ENCODE measurements at regions of chr4 and their contacts with region 1.

Region 1: DNA sequence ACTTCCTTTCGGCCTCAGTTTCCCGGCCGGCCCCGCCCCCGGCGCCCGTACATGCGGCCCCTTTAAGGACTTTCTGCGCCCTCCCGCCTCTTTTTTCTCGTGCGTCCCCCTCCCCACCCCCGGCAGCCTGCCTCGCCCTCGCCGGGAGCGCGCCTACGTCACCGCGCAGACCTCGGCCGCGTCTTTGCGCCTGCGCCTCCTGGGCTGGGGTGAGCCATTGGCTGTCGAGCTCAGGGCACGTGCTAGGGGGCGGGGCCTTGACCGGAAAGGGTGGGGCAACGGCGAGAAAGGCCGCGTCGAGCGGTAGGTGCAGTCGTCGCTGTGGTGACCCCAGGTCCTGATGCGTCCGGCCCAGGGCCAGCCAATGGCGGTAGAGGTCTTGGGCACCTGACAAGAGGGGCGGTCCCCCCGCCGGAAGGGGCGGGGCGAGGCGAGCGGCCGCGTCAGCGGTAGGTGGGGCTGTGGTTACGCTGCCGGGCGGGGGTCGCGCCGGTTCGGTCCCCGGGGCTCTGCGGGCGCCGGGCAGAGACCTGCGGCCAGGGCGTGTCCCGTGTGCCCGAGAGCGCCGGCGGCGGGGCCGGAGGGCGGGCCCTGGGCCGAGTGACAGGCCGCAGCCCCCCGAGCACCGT is at the start of gene UVSSA:
- DNase-seq: peak; percentile 98 to 99
- ATAC-seq: peak; percentile 87 to 93
- H3K4me3 ChIP-seq: peak within 1 kb of the TSS; percentile 91
- H3K27ac ChIP-seq: peak within 1 kb of the TSS; percentile 97 to 99
- H3K4me1 ChIP-seq: peaks cover 8% of the 10 kb centered on the region; the same call in 1 of the 3 replicates
- CTCF ChIP-seq: no peak
- EP300 ChIP-seq: no peak
- POLR2A ChIP-seq: peak; percentile 47
- RAD21 ChIP-seq: no peak
- polyA plus RNA-seq, gene UVSSA: 6.3 and 6.9 TPM in 2 replicates

Region 2: GRCh38 chr4:1130316-1131186 is 216.3 kb before region 1 on chr4:
- CTCF ChIA-PET with region 1: interaction called, 11 read pairs
- POLR2A ChIA-PET with region 1: no interaction called
- DNase-seq: peak; percentile 44 to 64
- ATAC-seq: peak; percentile 89 to 97
- H3K4me3 ChIP-seq: no peak overlapping the region
- H3K27ac ChIP-seq: no peak overlapping the region
- H3K4me1 ChIP-seq: no peaks in the 10 kb centered on the region
- CTCF ChIP-seq: peak; percentile 88
- EP300 ChIP-seq: no peak
- POLR2A ChIP-seq: no peak
- RAD21 ChIP-seq: peak; percentile 87 to 90

Region 3: DNA sequence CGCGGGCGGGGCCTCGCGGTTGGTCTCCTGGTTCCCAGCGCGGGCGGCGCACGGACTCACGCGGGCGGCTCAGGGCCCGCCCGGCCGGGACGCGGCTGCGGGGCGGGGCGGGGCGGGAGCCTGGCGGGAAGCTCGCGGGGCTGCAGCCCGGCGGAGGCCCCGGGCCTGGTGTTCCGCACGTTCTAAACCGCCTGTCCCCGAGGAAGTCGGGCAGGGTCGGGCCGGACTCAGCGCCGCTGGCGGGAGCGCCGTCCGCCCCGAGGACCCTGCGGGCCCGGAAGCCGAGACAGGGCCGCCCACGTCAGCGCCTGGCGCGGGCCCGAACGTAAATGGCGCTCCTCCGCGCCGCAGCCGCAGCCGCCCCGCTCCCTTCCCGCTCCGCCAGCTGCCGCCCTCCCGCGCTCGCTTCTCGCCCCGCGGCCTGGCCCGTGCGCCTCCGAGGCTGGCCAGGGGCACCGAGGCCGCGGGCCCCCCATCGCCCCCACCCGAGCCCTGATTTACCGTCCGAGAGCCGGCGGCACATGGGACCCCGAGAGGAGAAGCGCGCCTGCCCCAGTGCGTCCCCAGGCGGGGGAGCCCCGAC is 97.7 kb before region 1 on chr4:
- CTCF ChIA-PET with region 1: interaction called, 8 read pairs
- POLR2A ChIA-PET with region 1: interaction called, 26 read pairs
- DNase-seq: peak; percentile 65 to 88
- ATAC-seq: peak; percentile 66 to 68
- H3K4me3 ChIP-seq: peak overlapping the region; percentile 99
- H3K27ac ChIP-seq: peak overlapping the region; percentile 97 to 100
- H3K4me1 ChIP-seq: peaks cover 16% of the 10 kb centered on the region
- CTCF ChIP-seq: no peak
- EP300 ChIP-seq: no peak
- POLR2A ChIP-seq: 0 out of 2 replicates have a peak, but pooled peaks have one; percentile 39
- RAD21 ChIP-seq: no peak

Region 4: DNA sequence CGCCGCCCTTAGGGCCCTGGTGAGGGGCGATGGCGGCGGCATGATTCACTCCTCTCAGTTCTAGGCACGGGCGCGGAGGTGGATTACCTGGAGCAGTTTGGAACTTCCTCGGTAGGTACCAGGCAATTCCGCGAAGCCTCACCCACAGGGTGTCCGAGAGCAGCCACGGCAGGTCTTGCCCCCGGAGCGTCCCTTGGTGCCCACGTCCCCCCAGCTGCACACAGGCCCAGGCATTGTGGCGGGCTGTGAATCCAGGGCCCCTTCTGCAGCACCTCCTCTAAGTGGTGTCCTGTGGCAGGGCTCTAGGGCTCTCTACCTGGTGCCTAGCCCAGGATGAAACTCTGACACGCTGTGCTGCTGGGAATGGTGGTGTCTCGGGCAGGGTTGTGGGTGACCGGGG is 388.3 kb after region 1 on chr4:
- CTCF ChIA-PET with region 1: no interaction called
- POLR2A ChIA-PET with region 1: no interaction called
- DNase-seq: no peak
- ATAC-seq: no peak
- H3K4me3 ChIP-seq: no peak overlapping the region
- H3K27ac ChIP-seq: no peak overlapping the region
- H3K4me1 ChIP-seq: no peaks in the 10 kb centered on the region
- CTCF ChIP-seq: no peak
- EP300 ChIP-seq: no peak
- POLR2A ChIP-seq: no peak
- RAD21 ChIP-seq: no peak

Measured in A549 (cell line).